Activated CD4-positive, alpha-beta memory T cell treated with anti-CD3 and anti-CD28 coated beads for 36 hours (primary cell): ENCODE measurements at regions of chr19 and their contacts with region 1.

Region 1: DNA sequence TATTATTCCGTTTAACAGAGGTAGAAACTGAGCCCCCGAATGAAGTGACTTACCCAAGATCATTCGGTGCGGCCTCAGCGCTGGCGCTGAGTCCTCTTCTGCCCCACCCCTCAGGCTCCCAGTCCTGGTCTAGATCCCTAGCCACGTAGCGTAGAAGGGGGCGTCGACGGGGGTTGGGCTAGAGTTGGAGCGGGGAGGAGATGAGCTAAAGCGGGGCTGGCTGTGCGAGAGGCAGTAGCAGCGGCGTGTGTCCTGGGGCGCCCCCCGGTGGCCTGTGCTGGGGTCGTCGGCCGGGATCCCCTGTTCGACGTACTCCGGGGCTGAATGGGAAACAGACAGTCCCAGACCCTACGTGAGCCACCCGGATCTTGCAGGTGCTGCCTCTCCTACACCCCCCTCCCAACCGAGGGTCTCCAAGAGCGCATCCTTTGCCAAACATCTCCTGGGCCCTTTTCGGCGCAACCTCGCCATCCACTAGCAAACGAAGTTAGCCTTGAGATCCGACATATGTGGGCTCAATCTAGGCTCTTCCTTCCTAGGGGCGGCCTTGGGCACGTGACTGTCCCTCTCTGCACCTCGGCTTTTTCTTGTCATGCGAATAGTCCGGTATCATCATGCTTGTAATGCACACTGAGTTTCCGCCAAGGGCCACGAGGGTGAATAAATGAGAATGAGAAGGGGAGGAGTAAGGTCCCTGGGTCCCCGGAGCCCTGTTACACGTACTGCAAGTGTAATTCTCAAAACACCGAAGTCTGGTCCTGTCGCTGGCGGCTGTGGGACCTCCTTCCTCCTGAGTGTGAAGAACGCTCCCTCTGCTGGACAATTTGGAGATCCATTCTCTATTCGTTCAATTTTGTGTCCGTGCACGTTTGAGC is 47.7 kb downstream of the CYP4F22 start:
- DNase-seq: peak; percentile 99
- H3K4me3 Mint-ChIP-seq: peak overlapping the region; percentile 74
- H3K27ac Mint-ChIP-seq: peak overlapping the region; percentile 74
- H3K4me1 Mint-ChIP-seq: peaks cover 20% of the 10 kb centered on the region
- H3K27me3 Mint-ChIP-seq: peaks cover 6% of the 10 kb centered on the region

Region 2: GRCh38 chr19:15177269-15178116 is 378.5 kb before region 1 on chr19:
- CTCF ChIA-PET with region 1: interaction called, 11 read pairs
- POLR2A ChIA-PET with region 1: no interaction called
- intact Hi-C with region 1: loop called (anchors 1 kb)
- DNase-seq: peak; percentile 87
- H3K4me3 Mint-ChIP-seq: no peak overlapping the region
- H3K27ac Mint-ChIP-seq: no peak overlapping the region
- H3K4me1 Mint-ChIP-seq: peaks cover 4% of the 10 kb centered on the region
- H3K27me3 Mint-ChIP-seq: peaks cover 4% of the 10 kb centered on the region

Region 3: GRCh38 chr19:15379083-15379995 is 176.7 kb before region 1 on chr19 and contains the start of gene AKAP8:
- CTCF ChIA-PET with region 1: interaction called, 36 read pairs
- POLR2A ChIA-PET with region 1: interaction called, 4 read pairs
- intact Hi-C with region 1: loop called (anchors 1 kb)
- DNase-seq: peak; percentile 99
- H3K4me3 Mint-ChIP-seq: peak within 1 kb of the TSS; percentile 95
- H3K27ac Mint-ChIP-seq: peak within 1 kb of the TSS; percentile 96
- H3K4me1 Mint-ChIP-seq: peaks cover 42% of the 10 kb centered on the region
- H3K27me3 Mint-ChIP-seq: peaks cover 2% of the 10 kb centered on the region
- total RNA-seq, gene AKAP8: 31.5 to 37.2 TPM

Region 4: GRCh38 chr19:15432629-15433518 is 123.1 kb before region 1 on chr19:
- CTCF ChIA-PET with region 1: interaction called, 26 read pairs
- POLR2A ChIA-PET with region 1: interaction called, 4 read pairs
- intact Hi-C with region 1: loop called (anchors 1 kb)
- DNase-seq: peak; percentile 95
- H3K4me3 Mint-ChIP-seq: peak overlapping the region; percentile 85
- H3K27ac Mint-ChIP-seq: peak overlapping the region; percentile 85
- H3K4me1 Mint-ChIP-seq: peaks cover 31% of the 10 kb centered on the region
- H3K27me3 Mint-ChIP-seq: no peaks in the 10 kb centered on the region

Region 5: DNA sequence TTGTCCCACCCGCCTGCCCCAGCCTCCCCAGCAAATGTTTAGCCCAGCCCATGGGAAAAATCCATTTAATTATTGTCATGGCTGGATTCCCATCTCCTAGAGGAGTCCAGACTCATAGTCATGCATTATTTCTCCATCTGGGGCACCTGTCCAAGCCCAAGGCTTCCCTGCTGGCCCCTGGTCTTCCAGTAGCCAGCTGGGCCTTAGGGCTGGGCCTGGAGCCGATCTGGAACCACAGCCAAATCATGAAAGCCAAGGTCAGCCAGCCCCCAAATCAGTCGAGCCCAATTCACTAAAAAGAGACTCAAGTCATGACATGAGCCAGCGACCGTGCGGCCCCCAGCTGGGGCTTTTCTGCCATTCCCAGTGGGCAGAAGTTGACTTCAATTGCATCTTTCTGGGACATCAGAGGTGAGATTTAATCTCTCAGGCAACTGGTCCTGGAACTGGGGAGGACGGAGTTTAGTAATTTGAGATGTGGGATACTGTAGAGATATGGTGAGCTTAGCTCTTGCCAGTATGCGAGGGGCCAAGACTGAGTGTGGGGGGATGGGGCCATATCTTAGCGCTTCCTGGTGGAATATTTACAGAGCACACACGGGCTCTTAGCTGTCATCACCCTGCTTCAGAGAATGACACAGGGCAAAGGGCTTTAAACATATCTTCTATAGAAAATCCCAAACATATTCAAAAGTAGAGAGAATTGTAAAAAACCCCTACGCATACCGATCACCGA is 67.3 kb before region 1 on chr19:
- CTCF ChIA-PET with region 1: no interaction called
- POLR2A ChIA-PET with region 1: no interaction called
- intact Hi-C with region 1: no loop called
- DNase-seq: no peak
- H3K4me3 Mint-ChIP-seq: no peak overlapping the region
- H3K27ac Mint-ChIP-seq: no peak overlapping the region
- H3K4me1 Mint-ChIP-seq: peaks cover 6% of the 10 kb centered on the region
- H3K27me3 Mint-ChIP-seq: no peaks in the 10 kb centered on the region